ENCODE measurements at regions of chr16 and their contacts with region 1.

Region 1: GRCh38 chr16:3264137-3265036 is 8.0 kb upstream of the MEFV start:
- DNase-seq: peak; percentile 95 to 99 (median 98)
- ATAC-seq: peak; percentile 84 to 86
- H3K4me3 Mint-ChIP-seq: peak overlapping the region; percentile 86 to 97 (median 92)
- H3K27ac Mint-ChIP-seq: peak overlapping the region; percentile 96 to 99 (median 98)
- H3K4me1 Mint-ChIP-seq: peaks cover 11 to 44% (median 33%) of the 10 kb centered on the region in 4 donors
- H3K27me3 Mint-ChIP-seq: no peaks in the 10 kb centered on the region

Region 2: GRCh38 chr16:3182608-3183444 is 81.6 kb before region 1 on chr16:
- POLR2A ChIA-PET with region 1: interaction called, 19 read pairs
- DNase-seq: peak in 6 of 10 donors; percentile 15 to 79 (median 40)
- ATAC-seq: peak; percentile 50 to 65
- H3K4me3 Mint-ChIP-seq: peak overlapping the region; percentile 70 to 90 (median 84)
- H3K27ac Mint-ChIP-seq: peak overlapping the region in 5 of 10 donors; percentile 24 to 85 (median 73)
- H3K4me1 Mint-ChIP-seq: peaks cover 18 to 32% (median 25%) of the 10 kb centered on the region in 4 donors
- H3K27me3 Mint-ChIP-seq: peaks cover 38 to 83% (median 69%) of the 10 kb centered on the region in 5 donors

Region 3: DNA sequence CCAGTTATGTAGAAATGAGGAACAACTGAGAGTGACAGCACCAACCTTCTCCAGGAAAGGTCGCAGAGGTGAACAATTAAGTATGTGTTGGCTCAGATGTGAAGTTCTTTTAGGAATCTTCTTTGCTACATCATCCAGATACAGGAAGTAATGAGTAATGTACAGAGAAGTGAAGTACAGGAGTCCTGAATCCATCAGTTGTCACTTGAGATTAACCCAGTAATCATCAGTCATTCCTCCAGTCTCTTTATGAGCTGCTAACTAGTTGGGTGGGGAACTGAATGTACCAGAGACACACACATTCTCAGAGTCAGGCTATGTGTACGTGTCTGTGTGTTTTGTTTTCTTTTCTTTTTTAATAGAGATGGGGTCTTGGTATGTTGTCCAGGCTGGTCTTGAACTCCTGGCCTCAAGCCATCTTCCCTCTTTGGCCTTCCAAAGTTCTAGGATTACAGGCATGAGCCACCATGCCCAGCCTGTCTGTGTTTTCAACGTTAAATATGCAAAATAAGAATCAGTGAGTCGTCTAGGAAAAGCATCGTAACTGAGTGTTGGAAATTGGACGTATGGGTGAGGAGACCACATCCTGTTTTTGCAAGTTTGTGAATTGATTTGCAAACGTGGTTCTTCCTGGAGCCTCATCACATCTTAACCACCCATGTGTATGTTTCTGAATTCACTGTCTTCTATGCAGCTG is 49.3 kb before region 1 on chr16:
- POLR2A ChIA-PET with region 1: interaction called, 18 read pairs
- DNase-seq: peak in 8 of 10 donors; percentile 34 to 89 (median 76)
- ATAC-seq: peak; percentile 88 to 92
- H3K4me3 Mint-ChIP-seq: peak overlapping the region; percentile 55 to 88 (median 80)
- H3K27ac Mint-ChIP-seq: peak overlapping the region; percentile 94 to 100 (median 99)
- H3K4me1 Mint-ChIP-seq: peaks cover 23 to 47% (median 42%) of the 10 kb centered on the region in 4 donors
- H3K27me3 Mint-ChIP-seq: no peaks in the 10 kb centered on the region

Region 4: DNA sequence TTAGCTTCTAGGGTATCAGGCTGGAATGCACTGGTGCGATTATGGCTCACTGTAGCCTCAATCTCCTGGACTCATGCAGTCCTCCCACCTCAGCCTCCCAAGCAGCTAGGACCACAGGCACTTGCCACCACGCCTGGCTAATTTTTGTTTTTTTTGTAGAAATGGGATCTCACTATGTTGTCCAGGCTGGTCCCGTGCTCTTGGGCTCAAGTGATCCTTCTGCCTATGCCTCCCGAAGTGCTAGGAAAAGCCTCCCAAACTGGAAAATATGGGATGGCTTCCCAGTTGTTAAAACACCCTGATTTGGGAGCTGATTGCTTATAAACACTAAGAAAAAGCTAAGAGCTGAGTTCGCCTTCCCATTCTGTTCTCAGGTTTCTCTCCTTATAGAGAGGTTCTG is 12.3 kb after region 1 on chr16:
- POLR2A ChIA-PET with region 1: interaction called, 17 read pairs
- DNase-seq: no peak
- ATAC-seq: no peak
- H3K4me3 Mint-ChIP-seq: no peak overlapping the region
- H3K27ac Mint-ChIP-seq: peak overlapping the region in 1 of 10 donors; percentile 16
- H3K4me1 Mint-ChIP-seq: peaks cover 0 to 12% (median 2%) of the 10 kb centered on the region in 4 donors
- H3K27me3 Mint-ChIP-seq: no peaks in the 10 kb centered on the region

Region 5: GRCh38 chr16:3305109-3306068 is 41.0 kb after region 1 on chr16 and contains the starts of genes TIGD7 and ZNF75A:
- POLR2A ChIA-PET with region 1: interaction called, 17 read pairs
- DNase-seq: peak; percentile 67 to 93 (median 84)
- ATAC-seq: peak; percentile 93 to 96
- H3K4me3 Mint-ChIP-seq: peak within 1 kb of the TSS; percentile 75 to 90 (median 84)
- H3K27ac Mint-ChIP-seq: peak within 1 kb of the TSS; percentile 37 to 94 (median 84)
- H3K4me1 Mint-ChIP-seq: peaks cover 9 to 31% (median 20%) of the 10 kb centered on the region in 4 donors
- H3K27me3 Mint-ChIP-seq: no peaks in the 10 kb centered on the region
- polyA plus RNA-seq, gene TIGD7: 5.8 to 7.0 (median 5.8) TPM
- polyA plus RNA-seq, gene ZNF75A: 18.2 to 32.3 (median 23.6) TPM

Region 6: GRCh38 chr16:3503523-3503922 is 239.1 kb after region 1 on chr16:
- POLR2A ChIA-PET with region 1: interaction called, 10 read pairs
- DNase-seq: peak in 9 of 10 donors; percentile 18 to 79 (median 47)
- ATAC-seq: peak; percentile 32 to 54
- H3K4me3 Mint-ChIP-seq: peak overlapping the region; percentile 57 to 95 (median 82)
- H3K27ac Mint-ChIP-seq: peak overlapping the region; percentile 85 to 98 (median 95)
- H3K4me1 Mint-ChIP-seq: peaks cover 33 to 74% (median 69%) of the 10 kb centered on the region in 4 donors
- H3K27me3 Mint-ChIP-seq: peaks cover 0 to 2% (median 0%) of the 10 kb centered on the region in 5 donors